Activated CD4-positive, alpha-beta T cell treated with anti-CD3 and anti-CD28 coated beads for 36 hours (primary cell): ENCODE measurements at regions of chr17 and their contacts with region 1.

Region 1: DNA sequence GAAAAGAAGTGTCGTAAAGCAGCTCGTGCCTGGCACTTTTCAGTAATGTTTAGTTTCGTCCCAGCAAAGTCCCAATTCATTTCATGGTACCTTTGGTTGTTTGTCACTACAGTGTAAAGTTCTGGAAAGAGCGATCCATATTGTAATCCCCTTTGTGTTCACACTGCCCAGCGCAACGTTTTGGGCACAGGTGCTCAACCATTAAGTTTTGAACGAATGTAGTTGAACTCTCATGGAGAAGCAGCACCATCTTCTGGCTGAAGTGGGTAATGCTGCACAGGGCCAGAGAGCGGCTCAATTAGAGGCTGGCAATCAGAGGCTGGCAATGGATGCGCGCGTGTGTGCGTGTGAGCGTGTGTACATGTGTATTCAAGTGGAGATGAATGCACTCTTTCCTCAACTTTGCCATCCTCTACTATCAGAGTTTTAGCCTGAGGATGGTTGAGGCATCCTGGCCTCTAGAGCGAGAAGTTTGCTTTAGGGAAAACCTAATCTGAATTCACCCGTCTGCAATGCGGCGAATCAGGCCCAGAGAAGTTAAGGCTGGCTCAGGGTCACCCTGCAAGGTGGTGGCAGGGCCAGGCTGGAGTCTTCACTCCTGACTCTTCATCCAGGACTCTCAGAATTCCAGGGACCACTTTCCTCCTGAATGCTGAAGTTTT is 29.9 kb downstream of the DYNLL2 start:
- DNase-seq: peak; percentile 91
- ATAC-seq: peak; percentile 96
- H3K4me3 Mint-ChIP-seq: no peak overlapping the region
- H3K27ac Mint-ChIP-seq: no peak overlapping the region
- H3K4me1 Mint-ChIP-seq: no peaks in the 10 kb centered on the region
- H3K27me3 Mint-ChIP-seq: peaks cover 5% of the 10 kb centered on the region

Region 2: GRCh38 chr17:57861000-57861789 is 251.9 kb before region 1 on chr17:
- CTCF ChIA-PET with region 1: interaction called, 71 read pairs
- POLR2A ChIA-PET with region 1: no interaction called
- intact Hi-C with region 1: loop called (anchors 1 kb)
- DNase-seq: peak; percentile 55
- ATAC-seq: peak; percentile 73
- H3K4me3 Mint-ChIP-seq: peak overlapping the region; percentile 60
- H3K27ac Mint-ChIP-seq: no peak overlapping the region
- H3K4me1 Mint-ChIP-seq: peaks cover 9% of the 10 kb centered on the region
- H3K27me3 Mint-ChIP-seq: peaks cover 13% of the 10 kb centered on the region

Region 3: DNA sequence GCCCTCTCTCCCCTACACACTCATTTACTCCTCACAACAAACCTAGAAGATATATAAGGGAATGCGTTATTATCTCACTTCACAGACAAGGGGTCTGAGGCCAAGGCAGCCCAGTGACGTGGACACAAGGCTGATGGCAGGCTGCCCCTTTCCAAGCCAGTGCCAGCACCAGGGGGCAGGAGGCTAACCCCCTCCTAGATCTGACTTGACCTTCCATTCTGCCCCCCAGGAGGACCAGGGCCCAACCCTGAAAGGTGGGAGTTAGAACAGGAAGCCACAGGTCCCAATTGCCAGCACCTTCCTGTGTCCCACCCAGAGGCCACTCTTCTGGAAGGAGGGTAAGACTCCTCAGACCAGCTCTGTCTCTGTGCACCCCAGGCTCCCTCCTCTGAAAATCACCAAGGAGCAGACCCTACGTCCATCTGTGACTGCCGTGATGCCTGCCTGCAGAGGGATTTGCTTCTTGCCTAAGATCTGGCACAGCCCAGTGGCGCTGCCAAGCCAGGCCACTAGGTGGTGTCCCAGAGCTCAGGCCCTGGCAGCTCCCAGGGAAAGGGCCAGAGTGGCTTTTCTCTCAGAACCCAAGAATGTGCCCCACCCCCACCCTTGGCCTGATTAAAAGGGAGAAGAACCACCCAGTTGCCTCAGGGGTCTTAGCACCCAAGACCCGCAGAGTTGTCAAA is 220.8 kb before region 1 on chr17:
- CTCF ChIA-PET with region 1: interaction called, 6 read pairs
- POLR2A ChIA-PET with region 1: no interaction called
- intact Hi-C with region 1: loop called (anchors 1 kb)
- DNase-seq: peak; percentile 89
- ATAC-seq: peak; percentile 98
- H3K4me3 Mint-ChIP-seq: no peak overlapping the region
- H3K27ac Mint-ChIP-seq: no peak overlapping the region
- H3K4me1 Mint-ChIP-seq: peaks cover 3% of the 10 kb centered on the region
- H3K27me3 Mint-ChIP-seq: no peaks in the 10 kb centered on the region

Region 4: GRCh38 chr17:58066401-58066800 is 46.7 kb before region 1 on chr17:
- CTCF ChIA-PET with region 1: no interaction called
- POLR2A ChIA-PET with region 1: no interaction called
- intact Hi-C with region 1: no loop called
- DNase-seq: no peak
- ATAC-seq: no peak
- H3K4me3 Mint-ChIP-seq: no peak overlapping the region
- H3K27ac Mint-ChIP-seq: no peak overlapping the region
- H3K4me1 Mint-ChIP-seq: no peaks in the 10 kb centered on the region
- H3K27me3 Mint-ChIP-seq: peaks cover 14% of the 10 kb centered on the region

Region 5: GRCh38 chr17:58136669-58137283 is 23.7 kb after region 1 on chr17:
- CTCF ChIA-PET with region 1: no interaction called
- POLR2A ChIA-PET with region 1: no interaction called
- intact Hi-C with region 1: no loop called
- DNase-seq: no peak
- ATAC-seq: no peak
- H3K4me3 Mint-ChIP-seq: no peak overlapping the region
- H3K27ac Mint-ChIP-seq: no peak overlapping the region
- H3K4me1 Mint-ChIP-seq: no peaks in the 10 kb centered on the region
- H3K27me3 Mint-ChIP-seq: no peaks in the 10 kb centered on the region

Region 6: GRCh38 chr17:58487589-58488427 is 374.7 kb after region 1 on chr17 and contains the start of gene HSF5:
- CTCF ChIA-PET with region 1: no interaction called
- POLR2A ChIA-PET with region 1: no interaction called
- intact Hi-C with region 1: no loop called
- DNase-seq: peak; percentile 83
- ATAC-seq: peak; percentile 87
- H3K4me3 Mint-ChIP-seq: peak within 1 kb of the TSS; percentile 52
- H3K27ac Mint-ChIP-seq: peak within 1 kb of the TSS; percentile 47
- H3K4me1 Mint-ChIP-seq: peaks cover 14% of the 10 kb centered on the region
- H3K27me3 Mint-ChIP-seq: no peaks in the 10 kb centered on the region
- total RNA-seq, gene HSF5: 2.6 to 3.1 TPM